Naive thymus-derived CD4-positive, alpha-beta T cell (primary cell): ENCODE measurements at regions of chr19 and their contacts with region 1.

Region 1: GRCh38 chr19:49391581-49392399 is 3.7 kb downstream of the KASH5 start:
- DNase-seq: peak; percentile 61 to 82 (median 74)
- ATAC-seq: peak; percentile 89
- H3K4me3 ChIP-seq: no peak overlapping the region
- H3K4me3 Mint-ChIP-seq: peak overlapping the region in 2 of 10 donors; percentile 3 to 51
- H3K27ac ChIP-seq: no peak overlapping the region
- H3K27ac Mint-ChIP-seq: peak overlapping the region in 6 of 9 donors; percentile 1 to 84 (median 54)
- H3K4me1 ChIP-seq: peaks cover 7 to 13% of the 10 kb centered on the region in 2 donors
- H3K4me1 Mint-ChIP-seq: peaks cover 6 to 26% (median 10%) of the 10 kb centered on the region in 7 donors
- H3K27me3 ChIP-seq: no peaks in the 10 kb centered on the region
- H3K27me3 Mint-ChIP-seq: peaks cover 0 to 11% (median 3%) of the 10 kb centered on the region in 5 donors

Region 2: DNA sequence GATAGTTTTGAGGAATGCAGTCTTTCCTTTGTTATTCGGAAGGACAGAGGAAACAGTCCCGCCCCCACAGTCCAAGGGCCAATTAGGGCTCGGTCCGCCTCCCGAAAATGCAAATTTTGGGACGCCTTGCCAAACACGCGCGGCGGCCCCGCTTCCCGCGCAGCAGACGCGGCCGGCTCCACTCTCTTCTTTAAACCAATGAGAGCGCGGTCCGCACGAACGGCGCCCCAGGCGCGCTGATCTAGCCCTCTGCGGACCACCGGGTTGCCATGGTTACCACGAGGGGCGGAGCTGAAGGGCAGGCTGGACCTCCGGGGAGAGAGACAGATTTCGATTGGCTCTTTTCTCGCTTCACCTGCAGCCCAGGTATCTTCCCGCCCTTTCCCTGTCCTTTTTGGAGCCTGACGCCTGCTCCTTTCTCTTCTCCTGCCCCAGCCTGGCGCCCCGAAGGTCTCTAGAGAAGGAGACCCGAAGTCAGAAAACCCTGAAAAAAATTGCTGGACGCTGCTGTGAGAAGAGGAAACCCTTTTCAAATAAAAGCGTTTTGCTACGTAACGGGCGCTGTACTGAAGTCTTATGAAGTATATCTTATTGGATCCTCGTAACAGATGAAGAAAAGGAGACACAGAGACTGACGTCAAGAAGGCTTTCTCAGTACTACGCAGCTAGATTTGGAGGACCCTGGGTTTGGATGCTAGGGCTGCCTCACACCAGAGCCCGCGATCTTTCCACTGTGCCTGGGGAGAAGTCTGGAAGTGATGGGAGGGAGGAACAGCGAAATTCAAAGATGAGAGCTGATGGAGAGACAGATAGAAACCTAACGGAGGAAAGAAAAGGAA is 29.5 kb after region 1 on chr19:
- CTCF ChIA-PET with region 1: interaction called, 3 read pairs
- POLR2A ChIA-PET with region 1: interaction called, 3 read pairs
- intact Hi-C with region 1: loop called in 1 of 2 experiments (anchors 1 kb)
- DNase-seq: peak in 2 of 9 donors; percentile 24 to 59
- ATAC-seq: peak; percentile 57
- H3K4me3 ChIP-seq: no peak overlapping the region
- H3K4me3 Mint-ChIP-seq: peak overlapping the region in 9 of 10 donors; percentile 53 to 96 (median 64)
- H3K27ac ChIP-seq: no peak overlapping the region
- H3K27ac Mint-ChIP-seq: peak overlapping the region in 3 of 9 donors; percentile 48 to 89 (median 86)
- H3K4me1 ChIP-seq: peaks cover 29 to 30% of the 10 kb centered on the region in 2 donors
- H3K4me1 Mint-ChIP-seq: peaks cover 43 to 49% (median 46%) of the 10 kb centered on the region in 7 donors
- H3K27me3 ChIP-seq: peaks cover 22 to 31% of the 10 kb centered on the region in 2 donors
- H3K27me3 Mint-ChIP-seq: peaks cover 62 to 89% (median 82%) of the 10 kb centered on the region in 5 donors

Region 3: DNA sequence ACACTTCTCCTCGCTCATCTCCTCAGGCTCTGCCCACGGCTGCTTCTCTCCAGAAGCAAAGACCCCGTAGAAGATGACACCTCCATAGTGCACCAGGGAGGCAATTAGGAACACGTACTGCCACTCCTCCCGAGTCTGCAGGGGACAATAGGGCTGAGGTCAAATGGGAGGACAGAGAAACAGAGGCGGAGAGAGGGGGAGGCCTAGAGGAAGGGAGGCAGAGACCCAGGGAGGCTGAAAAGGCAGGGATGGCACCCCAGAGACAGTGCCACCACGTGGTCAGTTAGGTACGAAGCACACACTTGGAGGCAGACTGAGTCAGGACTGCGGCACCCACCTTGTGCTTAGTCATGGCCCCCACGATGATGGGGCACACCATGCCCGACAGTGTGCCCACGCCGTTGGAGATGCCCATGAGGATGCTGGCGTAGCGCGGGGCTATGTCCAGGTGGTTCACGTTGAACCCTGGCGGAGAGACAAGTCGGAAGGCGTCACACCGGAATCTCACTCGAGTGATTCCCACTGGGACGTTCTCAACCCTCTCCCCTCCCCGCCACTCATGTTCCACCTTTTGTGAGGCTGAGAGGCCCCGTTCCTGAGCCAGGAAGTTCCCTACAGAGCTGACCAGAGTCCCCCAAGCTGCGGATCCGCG is 39.0 kb after region 1 on chr19:
- CTCF ChIA-PET with region 1: interaction called, 5 read pairs
- POLR2A ChIA-PET with region 1: interaction called, 4 read pairs
- intact Hi-C with region 1: loop called (anchors 1 kb)
- DNase-seq: no peak
- ATAC-seq: peak; percentile 54
- H3K4me3 ChIP-seq: no peak overlapping the region
- H3K4me3 Mint-ChIP-seq: peak overlapping the region in 3 of 10 donors; percentile 23 to 32 (median 25)
- H3K27ac ChIP-seq: no peak overlapping the region
- H3K27ac Mint-ChIP-seq: peak overlapping the region in 1 of 9 donors; percentile 11
- H3K4me1 ChIP-seq: peaks cover 7 to 27% of the 10 kb centered on the region in 2 donors
- H3K4me1 Mint-ChIP-seq: peaks cover 33 to 53% (median 39%) of the 10 kb centered on the region in 7 donors
- H3K27me3 ChIP-seq: peaks cover 15 to 53% of the 10 kb centered on the region in 2 donors
- H3K27me3 Mint-ChIP-seq: peaks cover 79 to 96% (median 85%) of the 10 kb centered on the region in 5 donors

Region 4: GRCh38 chr19:49468746-49469447 is 77.1 kb after region 1 on chr19:
- CTCF ChIA-PET with region 1: interaction called, 28 read pairs
- POLR2A ChIA-PET with region 1: interaction called, 5 read pairs
- intact Hi-C with region 1: loop called (anchors 1 kb)
- DNase-seq: peak; percentile 59 to 98 (median 95)
- ATAC-seq: peak; percentile 87
- H3K4me3 ChIP-seq: peak overlapping the region; percentile 10
- H3K4me3 Mint-ChIP-seq: peak overlapping the region; percentile 73 to 91 (median 81)
- H3K27ac ChIP-seq: peak overlapping the region; percentile 97
- H3K27ac Mint-ChIP-seq: peak overlapping the region; percentile 94 to 100 (median 100)
- H3K4me1 ChIP-seq: peaks cover 55 to 59% of the 10 kb centered on the region in 2 donors
- H3K4me1 Mint-ChIP-seq: peaks cover 23 to 56% (median 40%) of the 10 kb centered on the region in 7 donors
- H3K27me3 ChIP-seq: no peaks in the 10 kb centered on the region
- H3K27me3 Mint-ChIP-seq: no peaks in the 10 kb centered on the region